ENCODE measurements at regions of chr3 and their contacts with region 1.

Region 1: DNA sequence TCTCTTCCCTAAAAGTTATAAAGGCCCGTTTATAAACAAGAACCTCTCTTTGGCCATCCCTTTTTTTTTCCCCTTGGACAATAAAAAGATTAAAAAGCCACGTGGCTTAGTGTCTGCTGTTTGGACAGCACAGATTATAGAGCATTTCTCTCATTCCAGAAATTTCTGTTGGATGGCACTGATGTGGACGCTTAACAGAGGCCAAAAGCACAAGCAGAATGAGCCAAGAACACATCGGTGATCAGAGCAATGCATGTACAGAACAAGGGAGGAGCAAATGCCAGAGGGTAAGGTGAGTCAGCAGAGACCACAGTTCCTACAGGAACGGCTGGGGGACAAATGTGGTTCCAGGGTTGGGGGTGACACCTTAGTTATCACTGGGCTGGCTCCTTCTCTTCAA is 30.3 kb upstream of the CTNNB1 start:
- DNase-seq: no peak
- H3K4me3 Mint-ChIP-seq: no peak overlapping the region
- H3K27ac Mint-ChIP-seq: no peak overlapping the region
- H3K4me1 Mint-ChIP-seq: peaks cover 19% of the 10 kb centered on the region
- H3K27me3 Mint-ChIP-seq: peaks cover 4% of the 10 kb centered on the region

Region 2: DNA sequence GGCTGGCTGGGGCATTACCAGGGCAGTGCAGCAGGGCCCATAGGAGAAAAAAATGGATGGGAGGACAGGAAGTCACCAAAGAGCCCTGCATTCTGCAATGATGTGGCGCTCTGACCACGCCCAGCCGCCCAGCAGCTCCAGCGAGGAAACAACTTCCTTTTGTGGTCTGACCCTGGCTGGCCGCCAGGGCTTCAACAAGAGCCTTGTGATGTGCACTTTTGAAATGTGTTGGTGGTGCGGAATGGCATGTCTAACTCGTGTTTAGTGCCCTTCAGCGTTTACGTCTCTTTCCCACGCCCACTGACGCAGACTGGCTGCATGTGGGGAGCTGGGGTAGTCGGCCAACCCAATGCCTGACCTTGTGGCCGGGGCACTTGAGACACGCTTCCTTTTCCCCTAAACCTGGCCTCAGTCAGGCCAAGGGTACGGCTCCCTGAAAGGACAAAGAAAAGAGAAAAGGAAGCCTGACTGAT is 51.6 kb before region 1 on chr3:
- intact Hi-C with region 1: loop called (anchors 5 kb)
- DNase-seq: peak; percentile 76
- H3K4me3 Mint-ChIP-seq: no peak overlapping the region
- H3K27ac Mint-ChIP-seq: peak overlapping the region; percentile 83
- H3K4me1 Mint-ChIP-seq: peaks cover 21% of the 10 kb centered on the region
- H3K27me3 Mint-ChIP-seq: no peaks in the 10 kb centered on the region

Region 3: GRCh38 chr3:41188268-41188667 is 19.2 kb after region 1 on chr3:
- intact Hi-C with region 1: loop called (anchors 1 kb)
- DNase-seq: peak; percentile 13
- H3K4me3 Mint-ChIP-seq: no peak overlapping the region
- H3K27ac Mint-ChIP-seq: peak overlapping the region; percentile 78
- H3K4me1 Mint-ChIP-seq: peaks cover 33% of the 10 kb centered on the region
- H3K27me3 Mint-ChIP-seq: peaks cover 12% of the 10 kb centered on the region